Transverse colon (tissue), 4 donors: ENCODE measurements at regions of chr17 and their contacts with region 1.

Region 1: GRCh38 chr17:44533533-44534246 is 23.6 kb upstream of the FZD2 start:
- DNase-seq: peak; percentile 89
- H3K4me3 ChIP-seq: peak overlapping the region in 1 of 4 donors; percentile 28
- H3K27ac ChIP-seq: peak overlapping the region; percentile 37 to 67 (median 53)
- H3K4me1 ChIP-seq: peaks cover 0 to 7% (median 6%) of the 10 kb centered on the region in 4 donors
- H3K27me3 ChIP-seq: no peaks in the 10 kb centered on the region
- CTCF ChIP-seq: peak; percentile 90 to 97 (median 96)
- EP300 ChIP-seq: no peak
- POLR2A ChIP-seq: no peak

Region 2: GRCh38 chr17:43723697-43724359 is 809.9 kb before region 1 on chr17:
- in situ Hi-C with region 1: no loop called
- intact Hi-C with region 1: no loop called
- DNase-seq: no peak
- H3K4me3 ChIP-seq: no peak overlapping the region
- H3K27ac ChIP-seq: no peak overlapping the region
- H3K4me1 ChIP-seq: peaks cover 0 to 5% (median 0%) of the 10 kb centered on the region in 4 donors
- H3K27me3 ChIP-seq: no peaks in the 10 kb centered on the region
- CTCF ChIP-seq: no peak
- EP300 ChIP-seq: no peak
- POLR2A ChIP-seq: no peak

Region 3: GRCh38 chr17:44636562-44636961 is 102.9 kb after region 1 on chr17:
- in situ Hi-C with region 1: loop called (anchors 10 to 25 kb)
- intact Hi-C with region 1: loop called (anchors 5 kb)
- DNase-seq: no peak
- H3K4me3 ChIP-seq: no peak overlapping the region
- H3K27ac ChIP-seq: no peak overlapping the region
- H3K4me1 ChIP-seq: no peaks in the 10 kb centered on the region
- H3K27me3 ChIP-seq: peaks cover 12% of the 10 kb centered on the region
- CTCF ChIP-seq: peak; percentile 21 to 30 (median 30)
- EP300 ChIP-seq: no peak
- POLR2A ChIP-seq: no peak

Region 4: GRCh38 chr17:44642834-44643233 is 109.1 kb after region 1 on chr17:
- in situ Hi-C with region 1: loop called (anchors 10 to 25 kb)
- intact Hi-C with region 1: loop called (anchors 5 kb)
- DNase-seq: no peak
- H3K4me3 ChIP-seq: no peak overlapping the region
- H3K27ac ChIP-seq: no peak overlapping the region
- H3K4me1 ChIP-seq: no peaks in the 10 kb centered on the region
- H3K27me3 ChIP-seq: peaks cover 31% of the 10 kb centered on the region
- CTCF ChIP-seq: no peak
- EP300 ChIP-seq: no peak
- POLR2A ChIP-seq: no peak